ENCODE measurements at regions of chr9 and their contacts with region 1.

Region 1: GRCh38 chr9:124291801-124292396 is 34.1 kb downstream of the NEK6 start:
- DNase-seq: no peak
- H3K4me3 ChIP-seq: no peak overlapping the region
- H3K27ac ChIP-seq: no peak overlapping the region
- H3K4me1 ChIP-seq: peaks cover 34% of the 10 kb centered on the region
- H3K27me3 ChIP-seq: no peaks in the 10 kb centered on the region
- CTCF ChIP-seq: no peak

Region 2: DNA sequence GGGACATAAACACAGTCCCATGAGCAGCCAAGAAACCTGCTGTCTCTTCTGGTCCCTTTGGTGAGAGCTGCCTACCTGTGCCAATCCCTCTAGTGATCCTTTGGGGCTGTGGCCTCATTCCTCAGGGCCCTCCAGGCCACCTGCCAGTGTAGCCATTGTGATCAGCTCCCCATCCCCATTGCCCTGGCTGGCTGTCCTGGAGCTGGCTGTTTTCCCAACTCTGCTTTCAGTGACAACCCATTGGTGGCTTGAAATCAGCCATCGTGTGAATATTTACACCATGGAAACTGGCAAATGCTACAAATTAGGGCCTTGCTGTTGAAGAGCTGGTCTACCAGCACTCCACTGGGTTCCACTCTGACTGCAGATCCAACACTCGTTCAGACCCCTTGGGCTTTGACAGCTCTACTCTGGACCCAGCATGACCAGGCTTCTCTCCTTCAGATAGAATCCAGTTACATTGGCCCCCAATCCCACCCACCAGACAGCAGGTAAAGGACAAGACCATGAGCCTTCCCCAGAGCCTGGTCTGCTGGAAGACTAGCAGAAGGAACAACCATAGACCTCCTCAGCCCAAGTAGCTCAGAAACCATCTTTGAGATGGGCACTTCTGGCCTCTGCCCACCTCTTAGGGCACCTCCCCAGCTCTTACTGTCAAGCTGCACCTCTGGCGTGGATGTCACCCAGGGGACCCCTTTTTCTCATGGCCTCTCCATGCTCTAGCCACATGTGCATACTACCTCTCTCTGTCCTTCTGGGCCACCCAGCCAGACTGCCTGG is 103.4 kb before region 1 on chr9:
- CTCF ChIA-PET with region 1: no interaction called
- dilution Hi-C with region 1: loop called (anchors 5 kb)
- in situ Hi-C with region 1: no loop called
- intact Hi-C with region 1: no loop called
- DNase-seq: no peak
- H3K4me3 ChIP-seq: no peak overlapping the region
- H3K27ac ChIP-seq: no peak overlapping the region
- H3K4me1 ChIP-seq: no peaks in the 10 kb centered on the region
- H3K27me3 ChIP-seq: peaks cover 3% of the 10 kb centered on the region
- CTCF ChIP-seq: no peak

Region 3: GRCh38 chr9:124210697-124211096 is 81.2 kb before region 1 on chr9:
- CTCF ChIA-PET with region 1: no interaction called
- dilution Hi-C with region 1: no loop called
- in situ Hi-C with region 1: no loop called
- intact Hi-C with region 1: no loop called
- DNase-seq: no peak
- H3K4me3 ChIP-seq: no peak overlapping the region
- H3K27ac ChIP-seq: no peak overlapping the region
- H3K4me1 ChIP-seq: no peaks in the 10 kb centered on the region
- H3K27me3 ChIP-seq: no peaks in the 10 kb centered on the region
- CTCF ChIP-seq: no peak

Region 4: GRCh38 chr9:124248066-124248465 is 43.8 kb before region 1 on chr9:
- CTCF ChIA-PET with region 1: no interaction called
- dilution Hi-C with region 1: loop called (anchors 5 kb)
- in situ Hi-C with region 1: no loop called
- intact Hi-C with region 1: no loop called
- DNase-seq: no peak
- H3K4me3 ChIP-seq: no peak overlapping the region
- H3K27ac ChIP-seq: no peak overlapping the region
- H3K4me1 ChIP-seq: peaks cover 8% of the 10 kb centered on the region
- H3K27me3 ChIP-seq: no peaks in the 10 kb centered on the region
- CTCF ChIP-seq: no peak

Region 5: DNA sequence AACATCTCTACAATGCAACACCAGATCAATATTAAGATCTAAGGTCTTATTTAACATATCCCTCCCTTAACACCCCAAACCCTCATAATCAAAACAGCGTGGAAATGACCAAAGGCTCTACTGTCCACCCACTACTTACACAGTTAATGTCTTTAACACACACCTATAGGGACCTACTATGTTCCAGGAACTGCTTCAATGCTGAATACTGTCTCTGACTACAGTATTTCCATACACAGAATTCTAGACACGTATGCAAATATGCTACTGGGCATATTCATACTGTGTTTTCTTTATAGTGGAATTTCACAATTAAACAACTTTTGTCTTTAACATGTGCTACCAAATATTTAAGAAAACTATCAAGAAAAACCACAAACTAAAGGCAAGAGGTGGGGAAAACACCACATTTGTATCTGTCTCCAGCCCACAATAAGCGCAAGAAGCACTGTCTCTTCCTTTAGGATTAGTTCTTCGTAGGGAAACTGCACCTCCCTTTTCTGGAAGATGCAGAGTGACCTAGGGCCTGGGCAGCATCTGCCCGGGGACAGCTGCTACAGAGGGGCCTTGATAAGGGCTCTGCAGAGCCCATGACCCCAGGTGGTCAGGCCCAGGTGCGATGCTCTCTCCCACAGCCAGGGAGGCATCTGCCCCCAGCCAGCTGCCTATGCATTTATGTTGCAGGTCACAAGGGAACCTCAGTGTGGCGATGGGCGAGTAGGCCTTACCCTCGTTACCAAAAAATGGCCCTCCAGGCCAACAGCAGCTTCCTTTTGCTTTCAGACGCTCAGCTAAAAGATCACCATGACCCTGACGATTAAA is 68.2 kb after region 1 on chr9:
- CTCF ChIA-PET with region 1: no interaction called
- dilution Hi-C with region 1: loop called (anchors 5 kb)
- in situ Hi-C with region 1: no loop called
- intact Hi-C with region 1: no loop called
- DNase-seq: no peak
- H3K4me3 ChIP-seq: no peak overlapping the region
- H3K27ac ChIP-seq: no peak overlapping the region
- H3K4me1 ChIP-seq: peaks cover 1% of the 10 kb centered on the region
- H3K27me3 ChIP-seq: no peaks in the 10 kb centered on the region
- CTCF ChIP-seq: no peak

Region 6: DNA sequence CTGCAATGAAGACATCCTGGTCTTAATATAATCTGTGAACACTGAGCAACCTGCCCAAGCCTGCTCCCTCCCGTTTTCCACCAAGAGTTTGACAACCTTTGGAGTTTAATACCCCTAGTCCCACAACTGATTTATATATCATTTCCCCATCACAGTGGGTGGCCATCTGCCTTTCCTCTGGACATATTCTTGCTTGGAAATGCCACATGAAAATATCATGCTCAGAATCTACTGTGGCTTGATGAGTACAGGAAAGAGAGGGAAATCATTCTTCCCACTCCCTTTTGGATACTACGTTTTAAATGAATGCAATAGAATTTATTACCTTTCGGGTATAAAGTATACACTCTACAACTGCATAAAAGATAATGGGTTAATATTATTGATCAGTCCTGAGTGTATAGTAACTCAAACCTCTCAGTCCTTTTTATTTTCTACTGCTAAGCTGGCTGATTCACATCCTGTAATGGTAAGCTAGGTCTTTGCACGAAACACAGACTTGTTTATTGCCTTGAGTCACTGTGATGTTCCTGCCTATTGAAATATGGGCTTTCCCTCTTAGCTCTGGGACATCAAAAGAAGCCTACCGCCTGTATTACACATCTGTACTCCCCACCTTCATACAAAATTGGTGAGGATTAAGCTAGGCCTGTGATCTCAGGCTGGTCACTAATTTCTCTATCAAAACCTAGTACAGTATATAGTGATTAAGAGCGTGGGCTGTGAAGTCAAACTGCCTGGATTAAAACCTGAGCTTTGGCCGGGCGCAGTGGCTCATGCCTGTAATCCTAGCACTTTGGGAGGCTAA is 282.8 kb after region 1 on chr9:
- CTCF ChIA-PET with region 1: no interaction called
- dilution Hi-C with region 1: no loop called
- in situ Hi-C with region 1: no loop called
- intact Hi-C with region 1: no loop called
- DNase-seq: peak; percentile 93
- H3K4me3 ChIP-seq: no peak overlapping the region
- H3K27ac ChIP-seq: peak overlapping the region; percentile 56
- H3K4me1 ChIP-seq: peaks cover 11% of the 10 kb centered on the region
- H3K27me3 ChIP-seq: no peaks in the 10 kb centered on the region
- CTCF ChIP-seq: no peak